Activated T-helper 2 cell treated with anti-CD3 and anti-CD28 coated beads, Interferon-gamma antibody, Interleukin-2, Interleukin-4, amounts not matched to agents 10 μg/mL and 5 μg/mL and 100 μg/mL, durations not matched to agents 14 hours and 24 hours and 36 hours (primary cell): ENCODE measurements at regions of chr3 and their contacts with region 1.

Region 1: GRCh38 chr3:45881078-45882022 is 5.0 kb upstream of the CCR9 start:
- DNase-seq: no peak
- H3K4me3 Mint-ChIP-seq: no peak overlapping the region
- H3K27ac Mint-ChIP-seq: peak overlapping the region; percentile 22
- H3K4me1 Mint-ChIP-seq: peaks cover 17% of the 10 kb centered on the region
- H3K27me3 Mint-ChIP-seq: peaks cover 61% of the 10 kb centered on the region

Region 2: GRCh38 chr3:45167011-45167911 is 714.1 kb before region 1 on chr3:
- intact Hi-C with region 1: no loop called
- DNase-seq: peak; percentile 83
- H3K4me3 Mint-ChIP-seq: peak overlapping the region; percentile 58
- H3K27ac Mint-ChIP-seq: peak overlapping the region; percentile 98
- H3K4me1 Mint-ChIP-seq: peaks cover 51% of the 10 kb centered on the region
- H3K27me3 Mint-ChIP-seq: no peaks in the 10 kb centered on the region

Region 3: DNA sequence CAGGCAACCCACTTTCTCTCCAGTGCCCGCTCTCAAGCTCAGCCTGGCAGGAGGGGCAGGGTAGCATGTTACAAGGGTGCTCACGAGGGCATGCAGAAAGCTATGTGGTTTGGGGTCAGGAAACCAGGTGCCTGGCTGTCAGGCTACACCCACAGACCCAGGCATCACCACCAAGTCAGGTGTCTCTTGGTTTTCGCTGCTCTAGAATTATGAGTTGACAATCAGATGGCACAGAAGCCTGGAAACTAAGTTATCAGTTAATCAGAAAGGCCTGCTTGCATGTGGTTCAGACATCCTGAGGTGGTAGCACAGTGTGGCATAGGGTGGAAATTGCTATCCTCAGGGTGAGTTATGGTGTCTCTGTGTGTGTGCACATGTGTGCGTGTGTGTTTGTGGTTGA is 11.3 kb before region 1 on chr3:
- intact Hi-C with region 1: loop called (anchors 1 kb)
- DNase-seq: peak; percentile 44
- H3K4me3 Mint-ChIP-seq: no peak overlapping the region
- H3K27ac Mint-ChIP-seq: no peak overlapping the region
- H3K4me1 Mint-ChIP-seq: peaks cover 29% of the 10 kb centered on the region
- H3K27me3 Mint-ChIP-seq: peaks cover 82% of the 10 kb centered on the region

Region 4: GRCh38 chr3:45915518-45916231 is 34.3 kb after region 1 on chr3:
- intact Hi-C with region 1: loop called (anchors 1 kb)
- DNase-seq: peak; percentile 68
- H3K4me3 Mint-ChIP-seq: peak overlapping the region; percentile 23
- H3K27ac Mint-ChIP-seq: peak overlapping the region; percentile 51
- H3K4me1 Mint-ChIP-seq: peaks cover 25% of the 10 kb centered on the region
- H3K27me3 Mint-ChIP-seq: peaks cover 38% of the 10 kb centered on the region